ENCODE measurements at regions of chr1 and their contacts with region 1.

Region 1: GRCh38 chr1:26787706-26788514 is at the start of gene PIGV:
- DNase-seq: peak; percentile 47 to 92
- H3K4me3 ChIP-seq: peak within 1 kb of the TSS; percentile 60 to 74
- H3K27ac ChIP-seq: peak within 1 kb of the TSS; percentile 98 to 99
- H3K4me1 ChIP-seq: peaks cover 9 to 25% of the 10 kb centered on the region in 2 donors
- H3K27me3 ChIP-seq: no peaks in the 10 kb centered on the region
- CTCF ChIP-seq: peak in 2 of 3 experiments; percentile 10 to 41
- total RNA-seq, gene PIGV: 8.8 TPM

Region 2: GRCh38 chr1:26602378-26602959 is 185.4 kb before region 1 on chr1:
- intact Hi-C with region 1: loop called (anchors 1 kb)
- DNase-seq: no peak
- H3K4me3 ChIP-seq: no peak overlapping the region
- H3K27ac ChIP-seq: no peak overlapping the region
- H3K4me1 ChIP-seq: no peaks in the 10 kb centered on the region
- H3K27me3 ChIP-seq: no peaks in the 10 kb centered on the region
- CTCF ChIP-seq: peak; percentile 77 to 88 (median 85)

Region 3: DNA sequence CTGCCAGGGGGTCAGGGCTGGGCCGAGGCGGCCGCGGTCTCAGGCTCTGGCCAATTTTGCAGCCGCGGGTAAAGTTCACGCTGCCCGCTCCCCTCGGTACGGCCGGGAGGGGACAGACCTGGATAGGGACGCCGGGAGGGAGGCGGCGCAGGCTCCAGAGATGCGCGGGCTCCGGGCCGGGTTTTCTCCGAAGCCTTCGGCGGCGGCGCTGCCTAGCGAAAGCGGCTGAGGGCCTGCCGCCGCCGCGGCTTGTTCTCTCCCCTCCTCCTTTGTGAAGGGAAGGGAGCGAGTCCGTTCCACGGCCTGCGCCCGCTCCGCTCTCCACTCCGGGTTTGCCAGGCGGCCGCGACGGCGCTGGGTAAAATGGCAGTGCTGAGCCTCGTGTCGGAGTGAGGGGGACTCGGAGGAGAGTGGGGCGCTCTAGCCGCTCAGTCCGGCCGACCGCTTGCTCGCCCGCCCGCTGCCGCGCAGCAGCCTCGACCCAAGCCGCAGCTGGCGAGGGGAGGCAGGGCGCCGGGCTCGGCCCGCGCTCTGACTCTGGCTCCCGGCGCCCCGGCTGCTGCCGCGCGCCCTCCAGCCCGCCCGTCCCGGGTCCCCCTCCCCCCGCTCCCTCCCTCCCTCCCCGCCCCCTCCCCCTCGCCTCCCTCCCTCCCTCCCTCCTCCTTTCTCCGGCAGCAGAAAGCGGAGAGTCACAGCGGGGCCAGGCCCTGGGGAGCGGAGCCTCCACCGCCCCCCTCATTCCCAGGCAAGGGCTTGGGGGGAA is 92.4 kb before region 1 on chr1 and contains the start of gene ARID1A:
- intact Hi-C with region 1: loop called (anchors 1 kb)
- DNase-seq: peak; percentile 86 to 98
- H3K4me3 ChIP-seq: peak within 1 kb of the TSS; percentile 96 to 98
- H3K27ac ChIP-seq: peak within 1 kb of the TSS; percentile 90 to 99
- H3K4me1 ChIP-seq: peaks cover 9 to 53% of the 10 kb centered on the region in 2 donors
- H3K27me3 ChIP-seq: no peaks in the 10 kb centered on the region
- CTCF ChIP-seq: peak in 2 of 3 experiments; percentile 15 to 47
- total RNA-seq, gene ARID1A: 104 TPM

Region 4: GRCh38 chr1:26744075-26744959 is 43.6 kb before region 1 on chr1:
- intact Hi-C with region 1: loop called (anchors 5 kb)
- DNase-seq: peak; percentile 87 to 95
- H3K4me3 ChIP-seq: no peak overlapping the region
- H3K27ac ChIP-seq: peak overlapping the region; percentile 57 to 84
- H3K4me1 ChIP-seq: peaks cover 14 to 41% of the 10 kb centered on the region in 2 donors
- H3K27me3 ChIP-seq: no peaks in the 10 kb centered on the region
- CTCF ChIP-seq: no peak